ENCODE measurements at regions of chr5 and their contacts with region 1.

Region 1: DNA sequence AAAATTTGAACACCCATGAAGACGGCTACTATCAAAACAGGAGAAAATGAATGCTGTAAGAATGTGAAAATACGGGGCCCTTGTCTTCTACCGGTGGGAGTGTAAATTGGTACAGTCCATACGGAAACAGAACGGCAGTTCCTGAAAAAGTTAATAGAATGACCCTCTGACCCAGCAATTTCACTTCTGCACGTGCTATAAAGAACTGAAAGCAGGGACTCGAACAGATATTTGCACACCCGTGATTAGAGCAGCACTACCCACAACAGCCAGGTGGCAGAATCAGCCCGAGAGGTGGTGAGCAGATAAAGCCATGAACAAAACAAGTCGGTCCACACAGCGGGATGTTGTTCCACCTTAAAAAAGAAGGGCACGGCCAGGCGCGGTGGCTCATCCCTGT is 22.6 kb upstream of the SLC12A7 start:
- DNase-seq: peak; percentile 76
- CTCF ChIP-seq: peak; percentile 34

Region 2: DNA sequence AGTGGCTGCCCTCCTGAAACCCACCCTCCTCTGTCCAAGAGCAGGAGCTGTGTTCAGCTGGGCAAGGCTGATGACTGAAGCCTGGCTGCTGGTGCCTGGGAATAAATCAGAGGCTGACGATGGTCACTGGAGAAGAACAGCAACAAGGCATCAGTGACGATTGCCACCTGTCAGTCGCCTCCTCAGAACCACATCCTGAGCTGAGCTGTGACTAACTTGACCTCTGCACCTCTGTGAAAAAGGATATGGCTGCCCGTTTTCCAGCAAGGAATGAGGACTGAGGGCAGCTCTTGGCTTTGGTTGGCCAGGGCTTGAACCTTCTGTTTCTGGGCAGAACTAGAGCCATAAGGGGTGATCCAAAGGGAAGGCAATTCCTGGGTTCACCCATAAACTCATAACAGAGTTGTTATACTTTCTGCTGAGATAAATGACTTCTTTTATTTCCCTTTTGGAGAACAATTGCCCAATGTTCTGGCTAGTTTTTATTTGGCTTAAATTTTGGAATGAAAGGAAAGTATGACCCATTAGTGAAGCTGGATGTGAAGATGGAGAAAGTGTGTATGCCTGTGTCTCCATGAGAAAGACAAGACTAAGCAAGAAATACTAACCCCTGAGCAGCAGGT is 201.7 kb before region 1 on chr5:
- in situ Hi-C with region 1: loop called (anchors 10 kb)
- DNase-seq: no peak
- CTCF ChIP-seq: no peak

Region 3: DNA sequence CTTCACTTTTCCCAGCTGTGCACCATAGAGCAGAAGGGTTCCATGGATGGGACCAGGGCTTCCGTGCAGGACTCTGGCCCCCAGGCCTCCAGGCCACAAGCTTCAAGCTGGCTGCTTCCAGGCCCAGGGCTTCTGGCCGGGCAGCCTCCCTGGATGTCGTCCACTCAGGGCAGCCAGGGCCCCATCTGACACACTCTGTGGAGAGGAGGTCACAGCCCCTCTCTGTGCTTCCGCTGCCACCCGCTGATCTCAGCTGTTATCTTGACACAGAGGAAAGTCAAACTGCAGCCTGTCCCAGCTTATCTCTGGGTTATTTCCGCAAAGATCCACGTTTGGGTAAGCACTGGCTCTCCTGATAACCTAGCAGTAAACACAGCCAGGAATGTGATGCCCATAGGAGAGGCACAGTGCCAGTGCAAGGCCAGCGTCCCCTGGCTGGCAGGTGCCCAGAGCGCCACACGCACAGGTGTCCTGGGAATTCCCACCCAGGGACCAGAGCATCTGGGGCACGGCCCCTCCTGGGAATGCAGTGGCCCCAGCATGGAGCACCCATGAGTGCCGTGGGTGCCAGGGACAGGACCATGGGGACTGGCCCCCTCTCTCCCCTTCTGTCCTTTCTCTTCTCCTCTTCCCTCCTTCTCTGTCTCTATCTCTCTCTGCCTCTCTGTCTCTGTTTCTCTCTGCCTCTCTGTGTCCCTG is 51.3 kb after region 1 on chr5:
- in situ Hi-C with region 1: no loop called
- DNase-seq: no peak
- CTCF ChIP-seq: no peak

Region 4: DNA sequence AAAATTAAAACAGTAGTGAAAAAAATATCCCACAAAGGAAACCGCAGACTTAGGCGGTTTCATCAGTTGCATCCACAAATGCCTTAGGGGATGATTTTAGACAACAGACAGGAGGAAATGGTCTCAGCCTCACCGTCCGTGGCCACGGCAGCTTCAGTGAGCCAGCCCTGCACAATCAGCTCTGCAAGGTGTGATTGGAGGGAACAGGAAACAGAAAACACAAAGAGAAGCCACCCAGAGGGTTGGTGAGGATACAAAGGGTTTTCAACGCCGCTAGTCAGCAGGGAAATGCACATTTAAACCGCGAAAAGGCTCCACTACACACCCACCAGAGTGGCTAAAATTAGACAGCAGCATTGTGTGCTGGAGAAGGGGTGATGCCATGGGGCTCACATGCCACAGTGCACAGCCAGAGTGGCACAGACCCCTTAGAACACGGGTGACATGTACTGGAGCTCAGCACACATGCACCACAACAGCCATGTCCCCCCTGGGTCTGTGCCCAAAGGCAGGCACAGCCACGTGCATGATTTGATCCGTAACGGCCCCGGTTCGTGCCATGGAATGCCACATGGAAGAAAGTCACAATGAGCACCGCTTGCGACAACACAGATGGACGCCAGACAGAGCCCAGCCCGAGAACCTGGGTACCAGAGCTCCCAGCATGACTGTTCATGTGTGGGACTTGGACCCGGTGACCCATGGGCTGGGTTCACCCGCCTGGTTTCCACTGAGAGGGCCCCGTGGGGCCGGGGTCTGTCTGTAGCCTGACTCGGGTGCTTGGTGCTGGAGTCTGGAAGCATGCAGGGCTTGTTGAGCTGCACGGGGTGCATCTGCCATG is 178.7 kb after region 1 on chr5:
- in situ Hi-C with region 1: no loop called
- DNase-seq: peak; percentile 75
- CTCF ChIP-seq: no peak

Region 5: DNA sequence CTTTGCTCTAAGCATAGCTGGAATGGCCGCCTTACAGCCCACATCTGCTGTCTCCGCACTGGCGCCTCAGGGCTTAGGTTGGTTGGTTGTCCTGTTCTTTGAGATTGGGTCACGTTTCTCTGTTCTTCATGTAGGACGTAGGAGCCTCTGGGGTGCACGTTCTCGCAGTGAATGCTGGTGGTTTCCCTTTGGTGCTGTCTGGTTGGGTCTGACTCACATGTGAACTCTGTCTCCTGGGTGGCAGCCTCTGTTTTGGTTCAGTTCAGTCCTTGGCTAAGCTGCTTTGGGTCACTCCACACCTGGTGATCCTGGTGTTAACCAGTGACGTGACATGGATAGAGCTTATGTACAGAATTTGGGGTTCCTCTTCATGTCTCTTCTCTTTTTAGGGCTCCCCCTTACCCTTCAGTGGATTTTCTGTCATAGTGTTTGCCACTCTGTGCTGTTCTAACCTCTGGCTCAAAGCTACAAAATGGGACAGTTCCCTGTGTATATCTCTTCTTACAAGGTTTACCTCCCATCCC is 401.9 kb after region 1 on chr5:
- in situ Hi-C with region 1: no loop called
- DNase-seq: peak; percentile 79
- CTCF ChIP-seq: no peak

Measured in GM13976 (cell line).